ENCODE measurements at regions of chr17 and their contacts with region 1.

Region 1: GRCh38 chr17:35764123-35764991 is 3.7 kb downstream of the C17orf50 start:
- DNase-seq: peak; percentile 90
- ATAC-seq: peak; percentile 94
- H3K4me3 Mint-ChIP-seq: peak overlapping the region; percentile 76
- H3K27ac Mint-ChIP-seq: peak overlapping the region; percentile 54
- H3K4me1 Mint-ChIP-seq: peaks cover 13% of the 10 kb centered on the region
- H3K27me3 Mint-ChIP-seq: peaks cover 3% of the 10 kb centered on the region

Region 2: DNA sequence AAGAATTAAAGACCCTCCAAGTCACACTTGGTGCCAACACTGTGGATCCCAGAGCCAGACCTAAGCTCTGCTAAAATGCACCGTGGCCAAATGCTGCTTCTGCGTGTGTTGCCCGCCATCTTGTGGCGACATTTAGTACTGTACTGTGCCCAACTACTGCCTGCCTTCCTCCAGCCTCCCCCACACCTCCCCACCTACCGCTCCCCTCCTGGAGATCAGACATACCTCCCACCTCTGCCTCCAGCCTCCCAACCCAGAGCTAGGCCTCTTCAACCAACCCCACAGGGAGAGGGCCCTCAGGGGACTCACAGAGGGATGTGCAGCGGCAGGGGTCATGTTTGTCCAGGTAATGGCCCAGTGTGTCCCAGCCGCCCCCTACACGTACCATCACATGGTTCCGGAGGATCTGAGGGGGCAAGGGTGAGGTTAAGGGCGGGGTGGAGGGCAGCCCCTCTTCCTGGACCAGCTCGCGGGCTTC is 16.8 kb before region 1 on chr17:
- CTCF ChIA-PET with region 1: interaction called, 58 read pairs
- DNase-seq: peak; percentile 85
- ATAC-seq: peak; percentile 90
- H3K4me3 Mint-ChIP-seq: no peak overlapping the region
- H3K27ac Mint-ChIP-seq: no peak overlapping the region
- H3K4me1 Mint-ChIP-seq: peaks cover 8% of the 10 kb centered on the region
- H3K27me3 Mint-ChIP-seq: peaks cover 46% of the 10 kb centered on the region

Region 3: GRCh38 chr17:35788504-35789368 is 24.4 kb after region 1 on chr17:
- CTCF ChIA-PET with region 1: interaction called, 106 read pairs
- DNase-seq: no peak
- ATAC-seq: no peak
- H3K4me3 Mint-ChIP-seq: no peak overlapping the region
- H3K27ac Mint-ChIP-seq: no peak overlapping the region
- H3K4me1 Mint-ChIP-seq: no peaks in the 10 kb centered on the region
- H3K27me3 Mint-ChIP-seq: peaks cover 46% of the 10 kb centered on the region

Region 4: DNA sequence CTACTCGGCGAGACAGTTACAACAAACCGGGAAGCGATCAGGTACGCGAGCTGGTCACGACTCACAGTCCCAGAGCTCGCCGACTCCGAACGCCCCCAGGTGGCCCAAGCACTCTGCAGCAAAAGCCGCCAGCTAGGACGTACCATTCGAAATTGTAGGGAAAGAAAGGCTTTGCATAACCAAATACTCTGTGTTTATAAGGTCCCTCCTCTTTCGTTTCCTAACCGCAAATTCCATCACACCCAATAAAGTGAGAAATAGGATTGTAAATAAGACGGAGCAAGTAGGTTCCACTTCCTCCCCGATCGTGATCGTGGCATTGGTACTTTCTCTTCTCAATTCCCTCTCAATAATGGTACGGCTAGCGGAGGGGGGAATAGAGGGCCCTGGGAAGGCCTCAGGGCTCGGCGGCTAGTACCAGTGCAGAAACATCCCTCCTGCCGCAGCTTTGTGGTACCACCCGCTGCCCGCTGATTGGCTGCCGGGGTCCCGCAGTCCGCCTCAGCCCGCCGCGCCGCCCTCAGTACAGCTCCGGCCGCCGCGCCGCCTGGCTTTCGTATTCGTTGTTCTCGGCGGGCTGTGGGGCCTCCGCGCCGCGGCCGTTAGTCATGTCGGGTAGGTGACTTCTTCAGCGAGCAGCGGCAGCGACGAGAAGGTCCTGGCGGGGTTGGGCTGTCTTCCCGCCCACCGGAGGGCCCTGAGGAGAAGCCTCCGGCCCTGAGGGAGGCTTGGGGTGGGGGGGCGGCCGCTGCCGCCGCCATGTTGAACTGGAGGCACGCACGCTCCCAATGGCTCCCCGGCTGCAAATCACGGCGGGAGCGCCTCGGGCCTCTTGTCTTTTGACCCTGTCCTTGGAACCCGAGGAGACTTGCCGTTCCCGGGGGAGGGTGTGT is 44.9 kb after region 1 on chr17 and contains the start of gene TAF15:
- CTCF ChIA-PET with region 1: interaction called, 368 read pairs
- DNase-seq: peak; percentile 98
- ATAC-seq: peak; percentile 92
- H3K4me3 Mint-ChIP-seq: peak within 1 kb of the TSS; percentile 92
- H3K27ac Mint-ChIP-seq: peak within 1 kb of the TSS; percentile 93
- H3K4me1 Mint-ChIP-seq: peaks cover 62% of the 10 kb centered on the region
- H3K27me3 Mint-ChIP-seq: no peaks in the 10 kb centered on the region
- total RNA-seq, gene TAF15: 333 to 366 TPM

Region 5: DNA sequence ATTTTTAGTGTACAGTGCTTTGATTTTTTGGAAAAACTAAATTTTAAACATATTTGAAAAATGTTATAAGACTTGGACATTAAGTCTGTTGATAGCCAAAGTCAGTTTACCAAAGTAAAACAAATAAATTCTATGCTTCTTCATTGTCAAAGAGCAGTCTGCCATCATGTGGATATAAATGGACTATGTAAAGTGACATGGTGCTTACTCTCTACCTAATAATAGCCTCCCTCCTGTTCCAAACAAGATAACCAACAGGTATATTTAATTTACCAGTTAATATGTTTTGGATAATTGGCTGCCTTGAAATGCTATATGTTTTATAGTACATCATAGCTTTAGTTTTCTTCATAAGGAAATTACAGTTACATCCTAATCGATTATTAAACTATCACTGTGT is 60.8 kb after region 1 on chr17:
- CTCF ChIA-PET with region 1: interaction called, 10 read pairs
- DNase-seq: no peak
- ATAC-seq: no peak
- H3K4me3 Mint-ChIP-seq: no peak overlapping the region
- H3K27ac Mint-ChIP-seq: no peak overlapping the region
- H3K4me1 Mint-ChIP-seq: peaks cover 5% of the 10 kb centered on the region
- H3K27me3 Mint-ChIP-seq: no peaks in the 10 kb centered on the region

Region 6: DNA sequence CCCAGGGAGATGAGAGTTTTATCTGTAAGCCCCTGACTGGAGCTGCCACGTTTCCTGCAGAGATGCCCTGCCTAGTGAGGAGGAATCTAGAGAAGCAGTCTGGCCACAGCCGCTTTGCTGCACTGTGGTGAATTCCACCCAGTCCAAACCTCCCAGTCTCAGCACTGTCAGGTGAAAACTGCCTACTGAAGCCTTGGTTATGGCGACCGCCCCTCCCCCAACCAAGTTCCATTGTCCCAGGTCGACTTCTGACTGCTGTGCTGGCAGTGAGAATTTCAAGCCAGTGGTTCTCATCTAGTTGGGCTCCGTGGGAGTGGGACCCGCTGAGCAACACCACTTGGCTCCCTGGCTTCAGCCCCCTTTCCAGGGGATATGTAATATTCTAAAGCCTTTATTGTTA is 189.4 kb after region 1 on chr17:
- CTCF ChIA-PET with region 1: no interaction called
- DNase-seq: no peak
- ATAC-seq: no peak
- H3K4me3 Mint-ChIP-seq: no peak overlapping the region
- H3K27ac Mint-ChIP-seq: no peak overlapping the region
- H3K4me1 Mint-ChIP-seq: peaks cover 4% of the 10 kb centered on the region
- H3K27me3 Mint-ChIP-seq: peaks cover 9% of the 10 kb centered on the region

Measured in activated CD8-positive, alpha-beta memory T cell treated with anti-CD3 and anti-CD28 coated beads, Interleukin-2, amount 10 ng/mL, durations not matched to agents 7 days and 5 days (primary cell).